GM23248 (cell line): ENCODE measurements at regions of chr2 and their contacts with region 1.

Region 1: DNA sequence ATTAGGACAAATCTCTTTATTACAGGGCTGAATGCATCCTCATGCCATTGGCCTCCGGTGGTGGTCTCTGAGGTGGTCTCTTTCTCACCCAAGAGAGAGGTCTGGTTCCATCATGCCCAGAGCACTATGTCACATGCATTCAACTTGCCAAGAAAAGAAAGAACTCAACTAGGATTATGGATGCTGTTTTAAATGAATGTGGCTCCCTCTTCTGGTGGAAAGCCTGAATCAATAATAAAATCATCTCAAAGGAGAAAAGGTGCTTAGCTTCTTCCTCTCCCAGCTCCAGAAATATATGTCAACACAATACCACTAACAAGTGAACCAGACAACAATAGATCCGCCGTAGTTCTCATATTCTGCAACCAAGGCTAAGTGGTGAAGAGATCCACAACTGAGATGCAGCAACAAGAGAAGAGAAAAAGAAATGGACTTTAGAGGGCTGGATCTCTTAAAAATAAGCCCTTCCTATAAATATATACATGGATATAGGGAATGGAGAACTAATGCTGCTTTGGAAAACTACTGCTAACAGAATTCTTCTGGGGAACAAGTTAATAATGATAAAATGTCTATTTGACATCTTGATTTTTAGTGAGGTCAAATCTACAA is 396.8 kb downstream of the NCKAP5 start:
- DNase-seq: peak; percentile 71
- H3K4me3 ChIP-seq: no peak overlapping the region
- H3K27ac ChIP-seq: no peak overlapping the region
- H3K4me1 ChIP-seq: no peaks in the 10 kb centered on the region
- H3K27me3 ChIP-seq: no peaks in the 10 kb centered on the region

Region 2: DNA sequence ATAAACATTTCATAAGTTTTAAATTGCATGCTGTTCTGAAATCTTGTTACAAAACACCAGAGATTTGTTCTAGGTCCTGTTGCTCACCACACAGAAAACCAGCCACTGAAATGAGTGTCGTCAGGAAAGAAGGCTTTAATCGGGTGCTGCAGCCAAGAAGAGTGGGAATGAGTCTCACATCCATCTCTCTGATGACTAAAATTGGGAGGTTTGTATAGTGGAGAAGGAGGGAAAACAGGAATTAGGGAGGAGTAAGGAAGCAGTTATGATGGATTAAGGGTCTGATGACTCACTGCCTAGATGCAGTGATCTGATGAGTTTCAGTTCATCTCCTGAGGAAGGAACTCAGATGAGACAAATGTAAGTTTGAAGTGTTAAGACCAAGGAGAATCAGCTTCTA is 796.9 kb before region 1 on chr2:
- in situ Hi-C with region 1: loop called (anchors 25 kb)
- DNase-seq: peak; percentile 52
- H3K4me3 ChIP-seq: no peak overlapping the region
- H3K27ac ChIP-seq: no peak overlapping the region
- H3K4me1 ChIP-seq: no peaks in the 10 kb centered on the region
- H3K27me3 ChIP-seq: no peaks in the 10 kb centered on the region; the same call in 1 of the 2 replicates

Region 3: GRCh38 chr2:133271133-133271532 is 99.6 kb after region 1 on chr2:
- in situ Hi-C with region 1: no loop called
- DNase-seq: no peak
- H3K4me3 ChIP-seq: no peak overlapping the region
- H3K27ac ChIP-seq: no peak overlapping the region
- H3K4me1 ChIP-seq: no peaks in the 10 kb centered on the region
- H3K27me3 ChIP-seq: 0 out of 2 replicates have a peak, but pooled peaks cover 5% of the 10 kb centered on the region

Region 4: DNA sequence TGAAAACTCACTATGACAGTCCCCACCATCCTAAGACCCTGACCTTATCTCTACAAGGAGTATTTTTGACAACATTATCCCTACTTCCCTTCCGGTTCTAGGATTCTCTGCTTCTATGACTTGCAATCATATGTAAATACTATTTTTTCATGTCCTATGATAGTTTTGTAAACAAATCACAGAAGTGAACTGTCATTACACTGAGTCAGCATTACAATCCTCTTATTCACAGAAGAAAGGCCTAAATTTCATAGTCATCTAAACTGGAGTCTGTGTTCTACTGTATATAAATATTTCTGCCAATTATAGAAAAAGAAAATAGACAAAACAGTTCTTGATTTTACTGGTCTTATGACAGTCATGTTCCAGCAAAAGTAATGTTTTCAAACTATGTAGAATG is 131.6 kb after region 1 on chr2:
- in situ Hi-C with region 1: no loop called
- DNase-seq: peak; percentile 56
- H3K4me3 ChIP-seq: no peak overlapping the region
- H3K27ac ChIP-seq: no peak overlapping the region
- H3K4me1 ChIP-seq: peaks cover 4% of the 10 kb centered on the region; the same call in 1 of the 2 replicates
- H3K27me3 ChIP-seq: no peaks in the 10 kb centered on the region

Region 5: GRCh38 chr2:133680343-133681049 is 509.0 kb after region 1 on chr2:
- in situ Hi-C with region 1: no loop called
- DNase-seq: no peak
- H3K4me3 ChIP-seq: no peak overlapping the region
- H3K27ac ChIP-seq: no peak overlapping the region
- H3K4me1 ChIP-seq: peaks cover 19% of the 10 kb centered on the region
- H3K27me3 ChIP-seq: 0 out of 2 replicates have a peak, but pooled peaks cover 3% of the 10 kb centered on the region

Region 6: GRCh38 chr2:133733901-133734255 is 562.4 kb after region 1 on chr2:
- in situ Hi-C with region 1: no loop called
- DNase-seq: peak; percentile 48
- H3K4me3 ChIP-seq: no peak overlapping the region
- H3K27ac ChIP-seq: no peak overlapping the region
- H3K4me1 ChIP-seq: peaks cover 14% of the 10 kb centered on the region
- H3K27me3 ChIP-seq: no peaks in the 10 kb centered on the region